ENCODE measurements at regions of chr20 and their contacts with region 1.

Region 1: GRCh38 chr20:53813636-53814429 is 220.2 kb upstream of the ZNF217 start:
- H3K4me3 Mint-ChIP-seq: no peak overlapping the region
- H3K27ac Mint-ChIP-seq: no peak overlapping the region
- H3K4me1 Mint-ChIP-seq: peaks cover 11% of the 10 kb centered on the region
- H3K27me3 Mint-ChIP-seq: no peaks in the 10 kb centered on the region

Region 2: GRCh38 chr20:53763707-53764414 is 50.0 kb before region 1 on chr20:
- intact Hi-C with region 1: loop called (anchors 10 kb)
- H3K4me3 Mint-ChIP-seq: no peak overlapping the region
- H3K27ac Mint-ChIP-seq: no peak overlapping the region
- H3K4me1 Mint-ChIP-seq: peaks cover 10% of the 10 kb centered on the region
- H3K27me3 Mint-ChIP-seq: no peaks in the 10 kb centered on the region

Region 3: GRCh38 chr20:53778041-53778516 is 35.8 kb before region 1 on chr20:
- intact Hi-C with region 1: no loop called
- H3K4me3 Mint-ChIP-seq: no peak overlapping the region
- H3K27ac Mint-ChIP-seq: no peak overlapping the region
- H3K4me1 Mint-ChIP-seq: peaks cover 19% of the 10 kb centered on the region
- H3K27me3 Mint-ChIP-seq: no peaks in the 10 kb centered on the region

Measured in dendritic cell treated with granulocyte-macrophage colony-stimulating factor and Interleukin-4, amounts not matched to agents 40 ng/mL and 50 ng/mL, for 4 days (primary cell).